CD14-positive monocyte (primary cell): ENCODE measurements at regions of chr12 and their contacts with region 1.

Region 1: GRCh38 chr12:120199595-120200306 is 1.2 kb downstream of the RPLP0 start:
- DNase-seq: peak; percentile 21 to 71 (median 50)
- H3K4me3 ChIP-seq: peak overlapping the region; percentile 78 to 89 (median 81)
- H3K4me3 Mint-ChIP-seq: peak overlapping the region; percentile 97
- H3K27ac ChIP-seq: peak overlapping the region in 1 of 2 donors; percentile 86
- H3K27ac Mint-ChIP-seq: peak overlapping the region; percentile 88 to 97 (median 94)
- H3K4me1 ChIP-seq: peaks cover 19 to 38% of the 10 kb centered on the region in 2 donors
- H3K4me1 Mint-ChIP-seq: peaks cover 31% of the 10 kb centered on the region
- H3K27me3 ChIP-seq: no peaks in the 10 kb centered on the region
- H3K27me3 Mint-ChIP-seq: peaks cover 0 to 2% (median 0%) of the 10 kb centered on the region in 3 donors
- CTCF ChIP-seq: no peak

Region 2: DNA sequence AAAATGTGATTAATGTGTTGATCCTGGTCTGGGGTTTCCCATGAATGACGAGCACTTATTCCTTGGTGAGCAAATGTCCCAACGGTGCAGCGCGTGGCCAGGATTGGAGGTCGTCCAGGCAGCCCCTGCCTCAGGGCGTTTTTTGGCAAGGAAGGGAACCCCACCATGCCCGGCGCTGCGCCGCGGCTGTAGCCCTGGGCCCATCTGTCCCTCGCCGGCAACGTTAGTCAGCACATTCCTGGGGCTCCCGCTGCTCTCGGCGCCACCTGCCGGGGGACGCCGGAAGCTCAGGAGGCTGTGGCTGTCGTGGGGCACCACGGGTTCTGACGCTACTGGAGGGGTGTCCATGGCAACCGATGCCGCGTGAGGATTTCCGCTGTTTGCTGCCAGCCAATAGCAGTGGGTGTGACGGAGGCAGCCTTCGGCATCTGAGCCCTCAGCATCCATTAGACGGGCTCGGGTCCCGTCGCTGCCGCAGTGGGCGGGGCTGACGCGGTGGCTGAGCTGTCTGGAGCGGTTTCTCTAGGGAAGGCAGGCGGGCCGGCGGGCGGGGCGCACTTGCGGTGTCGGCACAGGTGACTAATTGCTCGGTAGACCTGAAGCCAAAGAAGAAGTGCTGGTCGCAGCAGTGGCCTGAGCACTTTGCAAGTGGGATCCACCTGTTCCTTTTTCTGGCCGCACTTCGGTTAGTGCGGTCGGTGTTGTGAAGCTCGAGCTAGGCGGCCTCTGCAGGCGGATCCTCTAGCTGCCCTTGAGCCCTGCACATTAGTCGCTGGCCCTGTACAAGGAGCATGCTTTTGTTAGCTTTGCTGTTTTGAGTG is 112.7 kb before region 1 on chr12:
- intact Hi-C with region 1: loop called in 1 of 2 experiments (anchors 5 kb)
- DNase-seq: peak; percentile 99 to 100 (median 100)
- H3K4me3 ChIP-seq: peak overlapping the region; percentile 32 to 57 (median 33)
- H3K4me3 Mint-ChIP-seq: peak overlapping the region; percentile 73 to 87
- H3K27ac ChIP-seq: peak overlapping the region; percentile 16 to 44
- H3K27ac Mint-ChIP-seq: peak overlapping the region; percentile 54 to 90 (median 81)
- H3K4me1 ChIP-seq: peaks cover 15% of the 10 kb centered on the region in 2 donors
- H3K4me1 Mint-ChIP-seq: peaks cover 14% of the 10 kb centered on the region
- H3K27me3 ChIP-seq: no peaks in the 10 kb centered on the region
- H3K27me3 Mint-ChIP-seq: peaks cover 7 to 23% (median 15%) of the 10 kb centered on the region in 3 donors
- CTCF ChIP-seq: peak; percentile 95

Region 3: GRCh38 chr12:120116792-120117651 is 82.7 kb before region 1 on chr12:
- intact Hi-C with region 1: loop called in 1 of 2 experiments (anchors 5 kb)
- DNase-seq: peak; percentile 92 to 94 (median 92)
- H3K4me3 ChIP-seq: peak overlapping the region; percentile 65 to 91 (median 75)
- H3K4me3 Mint-ChIP-seq: peak overlapping the region; percentile 85 to 93
- H3K27ac ChIP-seq: peak overlapping the region; percentile 88 to 91
- H3K27ac Mint-ChIP-seq: peak overlapping the region; percentile 84 to 95 (median 91)
- H3K4me1 ChIP-seq: peaks cover 49 to 65% of the 10 kb centered on the region in 2 donors
- H3K4me1 Mint-ChIP-seq: peaks cover 73% of the 10 kb centered on the region
- H3K27me3 ChIP-seq: no peaks in the 10 kb centered on the region
- H3K27me3 Mint-ChIP-seq: no peaks in the 10 kb centered on the region
- CTCF ChIP-seq: no peak

Region 4: GRCh38 chr12:120126635-120127005 is 73.1 kb before region 1 on chr12:
- intact Hi-C with region 1: loop called in 1 of 2 experiments (anchors 2 kb)
- DNase-seq: peak; percentile 85 to 89 (median 89)
- H3K4me3 ChIP-seq: peak overlapping the region in 1 of 3 experiments; percentile 16
- H3K4me3 Mint-ChIP-seq: peak overlapping the region in 1 of 2 donors; percentile 70
- H3K27ac ChIP-seq: peak overlapping the region; percentile 47 to 62
- H3K27ac Mint-ChIP-seq: peak overlapping the region; percentile 86 to 97 (median 91)
- H3K4me1 ChIP-seq: peaks cover 27 to 35% of the 10 kb centered on the region in 2 donors
- H3K4me1 Mint-ChIP-seq: peaks cover 40% of the 10 kb centered on the region
- H3K27me3 ChIP-seq: no peaks in the 10 kb centered on the region
- H3K27me3 Mint-ChIP-seq: peaks cover 0 to 4% (median 0%) of the 10 kb centered on the region in 3 donors
- CTCF ChIP-seq: no peak